ENCODE measurements at regions of chr1 and their contacts with region 1.

Region 1: DNA sequence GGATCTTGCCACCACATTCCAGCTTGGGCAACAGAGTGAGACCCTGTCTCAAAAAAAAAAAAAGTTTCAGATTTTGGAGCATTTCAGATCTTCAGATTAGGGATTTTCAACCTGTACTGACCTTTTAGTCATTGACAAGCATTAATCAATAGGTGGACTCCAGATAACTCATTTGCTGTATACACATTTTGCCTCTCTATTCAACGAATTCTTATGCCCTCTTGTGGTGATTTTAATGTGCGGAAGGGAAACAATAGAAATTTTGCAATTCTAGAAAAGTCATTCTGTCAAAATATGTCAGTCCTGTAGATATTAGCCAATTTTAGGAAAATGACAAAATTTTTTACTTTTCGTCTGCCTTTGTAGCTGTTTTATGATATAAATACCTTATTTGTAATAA is 11.7 kb upstream of the OR2G2 start:
- DNase-seq: peak; percentile 82
- ATAC-seq: peak; percentile 63
- H3K4me3 ChIP-seq: no peak overlapping the region
- H3K27ac ChIP-seq: no peak overlapping the region
- H3K4me1 ChIP-seq: no peaks in the 10 kb centered on the region
- H3K27me3 ChIP-seq: peaks cover 21% of the 10 kb centered on the region; the same call in 1 of the 2 replicates
- CTCF ChIP-seq: peak; percentile 95

Region 2: DNA sequence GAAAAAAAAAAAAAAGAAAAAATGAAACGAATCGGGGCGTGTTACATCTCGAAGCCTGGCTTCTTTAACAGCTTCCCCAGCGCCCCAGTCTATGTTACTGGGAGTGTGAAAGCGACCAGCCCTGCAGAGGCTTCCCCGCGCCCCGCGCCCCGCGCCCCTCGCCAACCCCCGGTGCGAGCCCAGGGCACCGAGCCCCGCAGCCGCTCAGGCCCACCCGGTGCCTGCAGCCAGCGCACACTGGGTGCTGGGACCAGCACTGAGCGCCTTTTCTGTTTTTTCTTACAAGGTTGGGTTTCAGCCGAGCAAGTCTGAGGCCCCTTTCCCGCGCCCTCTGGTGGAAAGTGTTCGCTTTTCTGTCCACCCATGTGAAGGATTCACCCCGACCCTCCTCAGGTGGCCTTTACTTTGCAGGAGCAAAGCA is 202.8 kb before region 1 on chr1:
- CTCF ChIA-PET with region 1: no interaction called
- POLR2A ChIA-PET with region 1: no interaction called
- intact Hi-C with region 1: loop called (anchors 1 kb)
- DNase-seq: no peak
- ATAC-seq: no peak
- H3K4me3 ChIP-seq: no peak overlapping the region
- H3K27ac ChIP-seq: no peak overlapping the region
- H3K4me1 ChIP-seq: peaks cover 5% of the 10 kb centered on the region; the same call in 1 of the 2 replicates
- H3K27me3 ChIP-seq: no peaks in the 10 kb centered on the region
- CTCF ChIP-seq: peak; percentile 40

Region 3: GRCh38 chr1:247487057-247487456 is 89.4 kb before region 1 on chr1:
- CTCF ChIA-PET with region 1: no interaction called
- POLR2A ChIA-PET with region 1: no interaction called
- intact Hi-C with region 1: loop called (anchors 2 kb)
- DNase-seq: peak; percentile 91
- ATAC-seq: peak; percentile 88
- H3K4me3 ChIP-seq: no peak overlapping the region
- H3K27ac ChIP-seq: no peak overlapping the region
- H3K4me1 ChIP-seq: peaks cover 15% of the 10 kb centered on the region
- H3K27me3 ChIP-seq: peaks cover 42% of the 10 kb centered on the region
- CTCF ChIP-seq: peak; percentile 99

Region 4: DNA sequence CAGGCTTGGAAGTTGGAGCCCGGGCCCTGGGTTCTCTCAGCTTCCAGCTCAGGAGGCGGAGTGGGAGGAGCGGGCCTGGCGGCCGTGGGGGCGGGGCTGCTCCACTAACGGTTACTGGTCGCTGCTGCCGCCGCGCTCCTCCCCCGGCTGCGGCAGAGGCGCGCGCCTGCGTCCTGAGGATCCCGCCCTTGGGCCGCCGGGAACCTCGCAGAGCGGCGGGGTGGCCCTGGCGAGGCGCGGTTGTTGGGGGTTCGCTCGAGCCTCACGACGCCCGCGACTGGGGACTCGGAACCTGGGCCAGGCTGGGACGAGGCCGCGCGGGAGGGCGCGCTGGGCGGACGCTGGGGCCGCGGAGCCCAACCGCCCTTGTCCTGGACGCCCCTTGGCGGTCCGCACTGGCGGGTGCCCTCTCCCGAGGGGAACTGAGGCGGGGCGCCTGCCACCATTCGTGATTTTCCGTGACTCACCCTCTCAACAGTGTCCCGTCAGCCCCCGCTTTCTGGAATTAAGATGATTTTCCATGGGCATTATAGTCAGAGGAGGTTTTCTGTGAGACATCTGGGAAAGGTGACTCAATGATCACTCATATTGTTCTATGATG is 63.0 kb after region 1 on chr1:
- CTCF ChIA-PET with region 1: no interaction called
- POLR2A ChIA-PET with region 1: no interaction called
- intact Hi-C with region 1: loop called (anchors 1 kb)
- DNase-seq: peak; percentile 96
- ATAC-seq: peak; percentile 99
- H3K4me3 ChIP-seq: peak overlapping the region; percentile 69
- H3K27ac ChIP-seq: peak overlapping the region; percentile 86
- H3K4me1 ChIP-seq: peaks cover 26% of the 10 kb centered on the region
- H3K27me3 ChIP-seq: peaks cover 9% of the 10 kb centered on the region; the same call in 1 of the 2 replicates
- CTCF ChIP-seq: no peak

Region 5: GRCh38 chr1:247746486-247746885 is 170.0 kb after region 1 on chr1:
- CTCF ChIA-PET with region 1: no interaction called
- POLR2A ChIA-PET with region 1: no interaction called
- intact Hi-C with region 1: no loop called
- DNase-seq: peak; percentile 85
- ATAC-seq: peak; percentile 70
- H3K4me3 ChIP-seq: no peak overlapping the region
- H3K27ac ChIP-seq: no peak overlapping the region
- H3K4me1 ChIP-seq: peaks cover 31% of the 10 kb centered on the region
- H3K27me3 ChIP-seq: no peaks in the 10 kb centered on the region
- CTCF ChIP-seq: no peak

Region 6: DNA sequence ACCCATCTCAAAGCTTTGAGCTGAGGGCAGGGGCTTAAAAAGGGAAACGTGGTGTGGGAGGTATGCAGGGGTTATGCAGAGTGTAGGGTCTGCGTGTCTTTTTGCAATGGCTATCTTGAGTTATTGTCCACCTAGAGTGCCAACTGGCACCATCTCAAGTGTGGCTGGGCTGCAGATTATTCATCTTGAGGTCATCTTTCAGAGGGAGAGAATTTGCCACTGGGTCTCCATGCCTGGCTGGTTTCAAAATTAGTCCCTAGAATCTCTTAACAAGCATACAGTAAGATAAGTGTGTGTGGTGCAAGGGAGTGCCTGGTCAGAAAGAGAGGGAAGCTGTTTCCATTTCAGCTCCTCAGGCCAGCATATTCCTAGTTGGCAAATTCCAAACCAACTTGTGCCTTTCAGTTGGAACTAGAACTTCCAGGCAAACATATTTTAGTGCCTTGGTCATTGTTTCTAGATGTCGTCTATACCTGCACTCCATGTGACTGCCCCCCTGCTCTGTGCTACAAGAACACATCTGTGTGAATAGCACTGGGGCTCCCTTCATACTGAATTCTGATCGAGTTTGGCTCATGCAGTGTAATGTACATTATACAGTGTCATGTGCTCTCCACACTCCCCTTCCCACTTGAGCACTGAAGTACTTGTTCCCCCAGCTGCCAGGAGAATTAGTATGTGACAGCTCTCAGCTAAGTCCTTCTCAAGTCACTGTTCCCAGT is 338.6 kb after region 1 on chr1:
- CTCF ChIA-PET with region 1: interaction called, 3 read pairs
- POLR2A ChIA-PET with region 1: no interaction called
- intact Hi-C with region 1: loop called (anchors 10 kb)
- DNase-seq: peak; percentile 93
- ATAC-seq: peak; percentile 90
- H3K4me3 ChIP-seq: peak overlapping the region; percentile 39
- H3K27ac ChIP-seq: peak overlapping the region; percentile 45
- H3K4me1 ChIP-seq: peaks cover 25% of the 10 kb centered on the region
- H3K27me3 ChIP-seq: no peaks in the 10 kb centered on the region
- CTCF ChIP-seq: no peak